ENCODE measurements at regions of chr13 and their contacts with region 1.

Region 1: DNA sequence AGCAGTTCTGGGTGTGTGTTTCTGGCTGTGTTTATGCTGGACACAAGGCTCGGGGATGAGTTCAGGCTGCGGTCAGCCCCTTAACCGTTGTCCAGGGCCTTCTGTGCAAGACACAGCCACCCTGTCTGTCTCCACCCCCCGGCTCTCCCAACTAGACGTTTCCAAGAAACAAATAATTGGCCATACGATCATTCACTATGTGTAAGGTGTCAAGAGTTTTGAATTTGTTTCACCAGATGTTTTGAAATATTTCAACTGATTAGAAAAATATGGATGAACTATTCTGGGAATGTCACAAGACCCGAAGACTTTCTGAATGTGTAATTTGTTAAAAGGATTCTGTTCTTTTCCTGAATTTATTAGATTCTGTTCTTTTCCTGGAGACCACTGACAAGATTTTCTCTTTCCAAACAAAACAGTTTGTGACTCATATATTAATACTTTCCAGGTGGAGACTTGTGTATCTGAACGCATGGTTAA is 318.2 kb downstream of the MYO16 start:
- DNase-seq: no peak
- ATAC-seq: no peak
- H3K4me3 ChIP-seq: no peak overlapping the region
- H3K4me3 Mint-ChIP-seq: no peak overlapping the region
- H3K27ac ChIP-seq: no peak overlapping the region
- H3K27ac Mint-ChIP-seq: no peak overlapping the region
- H3K4me1 ChIP-seq: no peaks in the 10 kb centered on the region
- H3K4me1 Mint-ChIP-seq: no peaks in the 10 kb centered on the region
- H3K27me3 ChIP-seq: no peaks in the 10 kb centered on the region
- H3K27me3 Mint-ChIP-seq: peaks cover 6% of the 10 kb centered on the region
- CTCF ChIP-seq: no peak

Region 2: GRCh38 chr13:107867701-107868661 is 1079.6 kb before region 1 on chr13:
- CTCF ChIA-PET with region 1: no interaction called
- POLR2A ChIA-PET with region 1: no interaction called
- intact Hi-C with region 1: no loop called
- DNase-seq: no peak
- ATAC-seq: no peak
- H3K4me3 ChIP-seq: no peak overlapping the region
- H3K4me3 Mint-ChIP-seq: peak overlapping the region; percentile 53
- H3K27ac ChIP-seq: no peak overlapping the region
- H3K27ac Mint-ChIP-seq: no peak overlapping the region
- H3K4me1 ChIP-seq: no peaks in the 10 kb centered on the region
- H3K4me1 Mint-ChIP-seq: peaks cover 9% of the 10 kb centered on the region
- H3K27me3 ChIP-seq: peaks cover 5 to 14% of the 10 kb centered on the region in 2 experiments
- H3K27me3 Mint-ChIP-seq: peaks cover 49% of the 10 kb centered on the region
- CTCF ChIP-seq: no peak

Region 3: GRCh38 chr13:109026266-109026665 is 78.7 kb after region 1 on chr13:
- CTCF ChIA-PET with region 1: no interaction called
- POLR2A ChIA-PET with region 1: no interaction called
- intact Hi-C with region 1: no loop called
- DNase-seq: no peak
- ATAC-seq: no peak
- H3K4me3 ChIP-seq: no peak overlapping the region
- H3K4me3 Mint-ChIP-seq: no peak overlapping the region
- H3K27ac ChIP-seq: no peak overlapping the region
- H3K27ac Mint-ChIP-seq: no peak overlapping the region
- H3K4me1 ChIP-seq: no peaks in the 10 kb centered on the region
- H3K4me1 Mint-ChIP-seq: no peaks in the 10 kb centered on the region
- H3K27me3 ChIP-seq: no peaks in the 10 kb centered on the region
- H3K27me3 Mint-ChIP-seq: no peaks in the 10 kb centered on the region
- CTCF ChIP-seq: no peak

Region 4: DNA sequence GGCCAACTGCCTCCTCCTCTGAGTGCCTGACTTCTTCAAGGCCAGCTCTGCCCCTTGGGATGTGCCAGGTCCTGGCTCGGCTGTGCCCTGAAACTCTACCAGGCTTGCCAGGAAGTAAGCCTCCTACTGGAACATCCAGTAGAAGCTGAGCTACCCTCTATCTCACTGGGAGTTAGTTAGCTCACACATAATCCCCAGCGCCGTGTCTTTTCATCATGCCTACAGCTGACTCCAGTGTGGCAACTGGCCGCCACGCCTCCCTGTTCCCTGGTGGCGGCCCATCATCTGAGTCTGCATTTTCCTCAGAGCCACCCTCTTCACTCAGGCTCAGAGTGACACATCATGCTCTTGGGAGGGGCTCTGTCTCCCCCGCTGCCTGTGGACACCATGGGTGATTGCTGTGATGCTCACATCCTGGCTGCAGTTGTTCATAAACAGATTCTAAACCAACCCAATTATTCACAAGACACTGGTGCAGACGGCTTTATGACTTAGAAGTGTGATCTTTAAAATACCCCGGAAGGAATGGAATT is 970.7 kb after region 1 on chr13:
- CTCF ChIA-PET with region 1: no interaction called
- POLR2A ChIA-PET with region 1: no interaction called
- intact Hi-C with region 1: loop called in 1 of 2 experiments (anchors 10 kb)
- DNase-seq: no peak
- ATAC-seq: no peak
- H3K4me3 ChIP-seq: no peak overlapping the region
- H3K4me3 Mint-ChIP-seq: no peak overlapping the region
- H3K27ac ChIP-seq: no peak overlapping the region
- H3K27ac Mint-ChIP-seq: no peak overlapping the region
- H3K4me1 ChIP-seq: no peaks in the 10 kb centered on the region
- H3K4me1 Mint-ChIP-seq: no peaks in the 10 kb centered on the region
- H3K27me3 ChIP-seq: no peaks in the 10 kb centered on the region
- H3K27me3 Mint-ChIP-seq: peaks cover 8% of the 10 kb centered on the region
- CTCF ChIP-seq: no peak